GM12878 (cell line): ENCODE measurements at regions of chr3 and their contacts with region 1.

Region 1: DNA sequence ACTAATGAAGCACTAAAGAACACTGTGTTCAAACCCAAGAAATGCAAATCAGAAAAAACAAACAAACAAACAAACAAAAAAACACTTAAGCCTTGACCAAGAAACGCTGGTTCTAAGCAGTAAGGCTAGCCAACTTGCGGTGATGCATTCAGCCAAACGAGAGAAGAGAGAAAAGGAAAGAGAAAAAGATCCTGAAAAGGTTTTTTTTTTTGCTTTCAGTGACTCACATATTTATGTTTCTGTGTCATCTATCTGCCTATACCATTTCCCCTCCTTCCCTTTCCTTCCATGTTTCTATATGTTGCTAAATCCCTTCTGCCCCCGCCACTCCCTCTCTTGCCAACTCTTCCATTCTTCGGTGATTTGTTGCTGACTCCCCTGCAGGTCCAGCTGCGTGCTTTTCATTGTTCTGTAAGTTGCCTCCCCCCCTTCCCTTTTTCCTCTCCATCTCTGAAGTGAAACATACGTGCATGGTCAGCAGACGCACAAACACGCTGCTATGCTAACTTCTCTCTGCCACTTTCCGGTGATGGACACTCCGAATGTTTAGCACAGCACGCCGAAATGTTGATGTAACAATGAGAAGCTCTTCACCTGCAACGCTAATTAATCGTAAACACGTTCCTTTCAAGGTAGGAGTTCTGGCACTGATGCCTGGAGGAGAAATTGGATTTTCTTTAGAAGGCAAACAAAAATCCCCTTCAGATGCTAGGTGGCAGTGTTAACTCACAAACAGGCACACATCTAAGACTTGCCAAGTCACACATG is 154.4 kb downstream of the TUSC7 start:
- DNase-seq: peak; percentile 17
- ATAC-seq: peak; percentile 84
- H3K4me3 ChIP-seq: 0 out of 2 replicates have a peak overlapping the region, but pooled peaks have one; percentile 26
- H3K27ac ChIP-seq: no peak overlapping the region
- H3K4me1 ChIP-seq: no peaks in the 10 kb centered on the region
- H3K27me3 ChIP-seq: peaks cover 0 to 6% of the 10 kb centered on the region in 2 experiments; a peak in 1 of 4 replicates
- CTCF ChIP-seq: peak; percentile 45 to 64 (median 62); a peak in 5 of 6 replicates
- EP300 ChIP-seq: no peak
- POLR2A ChIP-seq: no peak
- RAD21 ChIP-seq: peak; percentile 92

Region 2: DNA sequence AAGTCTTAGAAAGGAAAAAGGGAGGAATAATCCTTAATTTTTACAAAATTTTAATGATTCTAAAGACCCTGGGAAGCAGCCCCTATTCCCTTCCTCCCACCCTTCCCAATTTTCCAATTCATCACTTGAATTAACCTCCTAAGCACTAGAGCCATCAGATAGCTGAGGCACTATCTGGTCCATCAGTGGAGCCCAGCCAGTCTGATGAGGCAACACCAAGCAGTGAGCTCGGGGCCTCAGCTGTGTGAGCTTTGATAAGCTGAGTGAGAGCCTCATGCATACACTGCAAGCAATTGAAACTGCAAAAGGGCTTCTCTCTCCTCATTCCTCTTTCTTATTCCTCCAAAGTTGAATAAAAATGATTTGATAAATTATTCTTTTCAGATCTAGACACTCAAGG is 122.5 kb before region 1 on chr3:
- CTCF ChIA-PET with region 1: no interaction called
- POLR2A ChIA-PET with region 1: no interaction called
- RAD21 ChIA-PET with region 1: no interaction called
- SMC1A ChIA-PET with region 1: no interaction called
- in situ Hi-C with region 1: no loop called
- intact Hi-C with region 1: no loop called
- DNase-seq: no peak
- ATAC-seq: no peak
- H3K4me3 ChIP-seq: no peak overlapping the region
- H3K27ac ChIP-seq: no peak overlapping the region
- H3K4me1 ChIP-seq: no peaks in the 10 kb centered on the region
- H3K27me3 ChIP-seq: no peaks in the 10 kb centered on the region
- CTCF ChIP-seq: no peak
- EP300 ChIP-seq: no peak
- POLR2A ChIP-seq: no peak
- RAD21 ChIP-seq: no peak

Region 3: DNA sequence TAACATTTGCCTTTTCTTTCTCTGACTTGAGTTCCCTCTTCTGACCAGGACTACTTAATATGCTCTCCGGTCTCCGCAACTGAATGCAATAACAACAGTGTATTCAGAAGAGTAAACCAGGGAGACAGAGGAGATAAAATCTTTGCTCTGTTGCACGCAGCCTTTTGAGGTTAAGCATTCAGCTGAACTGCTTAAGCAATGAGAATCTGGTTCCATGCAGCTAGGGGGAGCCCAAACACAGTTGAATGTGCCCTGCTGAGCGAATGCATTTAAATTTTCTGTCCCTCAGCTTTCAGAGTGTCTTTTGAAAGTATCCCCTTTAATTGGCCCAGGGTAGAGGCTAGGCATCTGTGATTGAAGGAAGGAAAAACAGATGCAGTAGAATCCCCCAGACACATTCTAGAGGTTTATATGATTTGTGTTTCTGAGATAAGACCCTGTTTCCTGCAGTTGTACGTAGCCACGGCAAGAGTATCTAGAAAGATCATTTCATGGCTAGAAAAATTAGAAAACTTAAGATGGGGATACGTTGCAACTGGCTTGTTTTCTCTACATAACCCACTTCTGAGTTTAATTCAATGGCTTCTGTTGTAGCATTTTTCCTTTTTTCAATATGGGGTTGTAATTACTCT is 155.2 kb after region 1 on chr3:
- CTCF ChIA-PET with region 1: interaction called, 16 read pairs
- POLR2A ChIA-PET with region 1: no interaction called
- RAD21 ChIA-PET with region 1: no interaction called
- SMC1A ChIA-PET with region 1: interaction called, 4 read pairs
- in situ Hi-C with region 1: no loop called
- intact Hi-C with region 1: loop called (anchors 2 kb)
- DNase-seq: no peak
- ATAC-seq: peak; percentile 94
- H3K4me3 ChIP-seq: no peak overlapping the region
- H3K27ac ChIP-seq: no peak overlapping the region
- H3K4me1 ChIP-seq: peaks cover 7% of the 10 kb centered on the region
- H3K27me3 ChIP-seq: no peaks in the 10 kb centered on the region
- CTCF ChIP-seq: peak; percentile 77 to 81 (median 79)
- EP300 ChIP-seq: no peak
- POLR2A ChIP-seq: no peak
- RAD21 ChIP-seq: peak; percentile 82

Region 4: DNA sequence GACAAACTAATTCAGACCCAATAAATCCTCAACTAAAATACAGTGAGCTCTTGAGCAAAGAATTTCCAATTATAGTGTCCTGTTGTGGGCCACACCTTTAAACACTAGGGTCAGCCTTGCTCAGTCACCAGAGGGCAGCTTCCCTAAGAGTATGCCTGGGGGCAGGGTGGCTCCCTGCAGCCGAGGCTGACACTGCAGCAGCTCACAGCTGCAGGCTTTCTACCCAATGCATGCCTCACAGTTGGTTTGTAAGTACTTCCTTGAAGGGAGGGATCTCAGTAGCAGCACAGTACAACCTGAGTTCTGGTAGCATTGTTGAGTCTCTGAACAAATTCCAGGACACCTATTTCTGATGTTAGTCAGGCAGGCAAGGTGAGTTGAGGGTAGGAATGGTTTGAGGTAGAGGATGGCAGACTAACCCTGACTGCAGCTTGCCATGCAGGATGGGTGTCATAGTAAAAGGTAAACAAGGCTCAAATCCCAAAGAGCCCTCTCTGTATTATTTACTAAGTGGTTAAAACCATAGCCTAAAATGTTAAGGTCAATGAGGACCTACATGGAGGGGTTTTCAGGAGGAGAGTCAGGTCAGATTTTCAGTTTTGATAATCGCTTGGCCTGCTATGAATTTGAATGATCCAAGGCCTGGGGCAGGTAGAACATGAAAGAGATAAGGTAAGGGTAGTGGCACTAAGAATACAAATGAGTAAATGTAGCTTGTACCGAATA is 181.3 kb after region 1 on chr3:
- CTCF ChIA-PET with region 1: no interaction called
- POLR2A ChIA-PET with region 1: no interaction called
- RAD21 ChIA-PET with region 1: no interaction called
- SMC1A ChIA-PET with region 1: no interaction called
- in situ Hi-C with region 1: no loop called
- intact Hi-C with region 1: no loop called
- DNase-seq: no peak
- ATAC-seq: peak; percentile 27; the same call in 1 of the 3 replicates
- H3K4me3 ChIP-seq: no peak overlapping the region
- H3K27ac ChIP-seq: no peak overlapping the region
- H3K4me1 ChIP-seq: no peaks in the 10 kb centered on the region
- H3K27me3 ChIP-seq: no peaks in the 10 kb centered on the region
- CTCF ChIP-seq: no peak
- EP300 ChIP-seq: no peak
- POLR2A ChIP-seq: no peak
- RAD21 ChIP-seq: no peak

Region 5: GRCh38 chr3:117074826-117075225 is 210.8 kb after region 1 on chr3:
- CTCF ChIA-PET with region 1: no interaction called
- POLR2A ChIA-PET with region 1: no interaction called
- RAD21 ChIA-PET with region 1: no interaction called
- SMC1A ChIA-PET with region 1: no interaction called
- in situ Hi-C with region 1: no loop called
- intact Hi-C with region 1: loop called (anchors 5 kb)
- DNase-seq: no peak
- ATAC-seq: no peak
- H3K4me3 ChIP-seq: no peak overlapping the region
- H3K27ac ChIP-seq: no peak overlapping the region
- H3K4me1 ChIP-seq: no peaks in the 10 kb centered on the region
- H3K27me3 ChIP-seq: no peaks in the 10 kb centered on the region; a peak in 1 of 4 replicates
- CTCF ChIP-seq: no peak
- EP300 ChIP-seq: no peak
- POLR2A ChIP-seq: no peak
- RAD21 ChIP-seq: no peak

Region 6: DNA sequence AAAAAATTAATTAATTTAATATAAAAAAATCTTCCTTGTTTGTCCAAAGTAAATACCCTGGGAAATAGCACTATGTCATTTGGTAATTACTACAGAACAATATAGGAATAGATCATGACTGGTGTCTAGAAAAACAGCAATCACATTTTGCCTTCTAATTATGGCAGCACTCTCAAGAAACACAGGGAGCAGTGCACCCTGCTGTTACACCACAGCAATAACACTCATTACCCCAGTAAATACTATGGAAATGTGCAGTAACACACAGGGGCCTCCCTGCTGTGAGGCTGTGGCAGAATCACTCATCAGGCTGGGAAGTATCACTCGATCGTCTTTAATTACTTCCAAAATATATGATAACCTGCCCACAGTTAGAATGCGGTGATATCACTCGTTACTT is 491.6 kb after region 1 on chr3:
- CTCF ChIA-PET with region 1: no interaction called
- POLR2A ChIA-PET with region 1: no interaction called
- RAD21 ChIA-PET with region 1: no interaction called
- SMC1A ChIA-PET with region 1: no interaction called
- in situ Hi-C with region 1: no loop called
- intact Hi-C with region 1: loop called (anchors 2 kb)
- DNase-seq: no peak
- ATAC-seq: peak; percentile 90
- H3K4me3 ChIP-seq: no peak overlapping the region
- H3K27ac ChIP-seq: no peak overlapping the region
- H3K4me1 ChIP-seq: no peaks in the 10 kb centered on the region
- H3K27me3 ChIP-seq: no peaks in the 10 kb centered on the region; a peak in 1 of 4 replicates
- CTCF ChIP-seq: peak; percentile 27 to 60 (median 51); a peak in 3 of 6 replicates
- EP300 ChIP-seq: no peak
- POLR2A ChIP-seq: no peak
- RAD21 ChIP-seq: peak; percentile 49

Region 7: GRCh38 chr3:117719316-117719926 is 855.4 kb after region 1 on chr3:
- CTCF ChIA-PET with region 1: no interaction called
- POLR2A ChIA-PET with region 1: no interaction called
- RAD21 ChIA-PET with region 1: no interaction called
- SMC1A ChIA-PET with region 1: no interaction called
- in situ Hi-C with region 1: no loop called
- intact Hi-C with region 1: loop called (anchors 10 kb)
- DNase-seq: no peak
- ATAC-seq: peak; percentile 54; the same call in 2 of the 3 replicates
- H3K4me3 ChIP-seq: no peak overlapping the region
- H3K27ac ChIP-seq: no peak overlapping the region
- H3K4me1 ChIP-seq: no peaks in the 10 kb centered on the region
- H3K27me3 ChIP-seq: no peaks in the 10 kb centered on the region; a peak in 1 of 4 replicates
- CTCF ChIP-seq: peak; percentile 50 to 57 (median 55)
- EP300 ChIP-seq: no peak
- POLR2A ChIP-seq: no peak
- RAD21 ChIP-seq: peak; percentile 54; the same call in 1 of the 2 replicates